K562 (cell line): ENCODE measurements at regions of chr16 and their contacts with region 1.

Region 1: GRCh38 chr16:15660203-15660601 is 10.2 kb downstream of the NDE1 start:
- DNase-seq: peak in 1 of 4 experiments; percentile 47
- ATAC-seq: peak; percentile 59
- H3K4me3 ChIP-seq: no peak overlapping the region
- H3K27ac ChIP-seq: peak overlapping the region; percentile 68
- H3K4me1 ChIP-seq: peaks cover 14 to 25% of the 10 kb centered on the region in 2 experiments; a peak in 4 of 5 replicates
- H3K27me3 ChIP-seq: no peaks in the 10 kb centered on the region
- CTCF ChIP-seq: no peak
- EP300 ChIP-seq: no peak
- POLR2A ChIP-seq: no peak
- RAD21 ChIP-seq: no peak

Region 2: GRCh38 chr16:15672514-15673167 is 12.4 kb after region 1 on chr16:
- CTCF ChIA-PET with region 1: no interaction called
- POLR2A ChIA-PET with region 1: interaction called, 14 read pairs
- in situ Hi-C with region 1: no loop called
- intact Hi-C with region 1: no loop called
- DNase-seq: peak in 1 of 4 experiments; percentile 21
- ATAC-seq: peak; percentile 63
- H3K4me3 ChIP-seq: no peak overlapping the region
- H3K27ac ChIP-seq: no peak overlapping the region
- H3K4me1 ChIP-seq: no peaks in the 10 kb centered on the region
- H3K27me3 ChIP-seq: no peaks in the 10 kb centered on the region
- CTCF ChIP-seq: no peak
- EP300 ChIP-seq: no peak
- POLR2A ChIP-seq: no peak
- RAD21 ChIP-seq: no peak; a peak in 1 of 4 replicates